Natural killer cell (primary cell): ENCODE measurements at regions of chr3 and their contacts with region 1.

Region 1: DNA sequence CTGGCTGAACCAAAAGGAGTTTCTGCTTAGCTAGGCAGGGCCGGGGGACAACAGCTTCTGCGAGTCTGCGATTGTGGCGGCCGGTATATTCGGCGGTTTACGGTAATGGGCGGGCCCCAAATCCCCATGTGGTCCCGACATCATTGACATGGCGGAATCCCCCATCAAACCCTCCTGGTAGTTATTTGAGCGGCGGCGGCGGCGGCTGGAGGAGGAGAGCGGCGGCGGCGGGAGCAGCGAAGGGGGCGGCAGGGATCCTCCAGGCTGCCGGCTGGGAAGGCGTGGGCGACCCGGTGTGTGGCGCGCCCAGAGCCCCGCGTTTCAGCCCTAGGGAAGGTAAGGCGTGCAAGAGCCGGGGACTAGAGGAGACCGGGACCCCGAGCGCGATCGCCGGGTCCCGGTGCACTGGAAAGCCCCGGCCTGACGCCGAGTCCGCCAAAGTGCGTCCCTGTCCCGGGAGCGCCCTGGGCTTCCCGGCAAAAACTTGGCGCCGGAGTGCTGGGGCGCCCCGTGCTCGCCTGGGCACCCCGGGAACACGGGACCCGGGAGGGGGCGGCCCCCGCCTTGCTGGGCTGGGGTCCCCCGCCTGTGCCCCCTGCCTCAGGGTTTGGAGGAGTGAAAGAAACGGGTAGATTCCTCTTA is at the start of gene FNDC3B:
- DNase-seq: peak; percentile 93 to 94
- ATAC-seq: peak; percentile 81 to 92 (median 87)
- H3K4me3 ChIP-seq: peak within 1 kb of the TSS; percentile 99
- H3K4me3 Mint-ChIP-seq: peak within 1 kb of the TSS; percentile 98
- H3K27ac ChIP-seq: peak within 1 kb of the TSS; percentile 99
- H3K27ac Mint-ChIP-seq: peak within 1 kb of the TSS; percentile 94 to 100
- H3K4me1 ChIP-seq: peaks cover 42% of the 10 kb centered on the region
- H3K4me1 Mint-ChIP-seq: peaks cover 66 to 77% of the 10 kb centered on the region in 2 donors
- H3K27me3 ChIP-seq: no peaks in the 10 kb centered on the region
- H3K27me3 Mint-ChIP-seq: no peaks in the 10 kb centered on the region
- CTCF ChIP-seq: no peak
- total RNA-seq, gene FNDC3B: 154 to 214 (median 206) TPM

Region 2: GRCh38 chr3:171809821-171810628 is 229.5 kb before region 1 on chr3 and contains the start of gene PLD1:
- intact Hi-C with region 1: loop called (anchors 5 kb)
- DNase-seq: peak; percentile 58 to 65
- ATAC-seq: peak; percentile 67 to 86 (median 81)
- H3K4me3 ChIP-seq: peak within 1 kb of the TSS; percentile 73
- H3K4me3 Mint-ChIP-seq: peak within 1 kb of the TSS; percentile 93
- H3K27ac ChIP-seq: peak within 1 kb of the TSS; percentile 58
- H3K27ac Mint-ChIP-seq: peak within 1 kb of the TSS; percentile 80 to 93
- H3K4me1 ChIP-seq: peaks cover 19% of the 10 kb centered on the region
- H3K4me1 Mint-ChIP-seq: peaks cover 42 to 47% of the 10 kb centered on the region in 2 donors
- H3K27me3 ChIP-seq: no peaks in the 10 kb centered on the region
- H3K27me3 Mint-ChIP-seq: no peaks in the 10 kb centered on the region
- CTCF ChIP-seq: no peak
- total RNA-seq, gene PLD1: 13.2 to 26.3 (median 17.1) TPM

Region 3: GRCh38 chr3:171980578-171981270 is 58.8 kb before region 1 on chr3:
- intact Hi-C with region 1: loop called (anchors 5 kb)
- DNase-seq: peak; percentile 27 to 43
- ATAC-seq: peak; percentile 97 to 99 (median 97)
- H3K4me3 ChIP-seq: no peak overlapping the region
- H3K4me3 Mint-ChIP-seq: peak overlapping the region; percentile 75
- H3K27ac ChIP-seq: peak overlapping the region; percentile 23
- H3K27ac Mint-ChIP-seq: peak overlapping the region; percentile 87 to 88
- H3K4me1 ChIP-seq: peaks cover 20% of the 10 kb centered on the region
- H3K4me1 Mint-ChIP-seq: peaks cover 39 to 48% of the 10 kb centered on the region in 2 donors
- H3K27me3 ChIP-seq: no peaks in the 10 kb centered on the region
- H3K27me3 Mint-ChIP-seq: no peaks in the 10 kb centered on the region
- CTCF ChIP-seq: no peak

Region 4: GRCh38 chr3:172129870-172130683 is 90.5 kb after region 1 on chr3:
- intact Hi-C with region 1: loop called (anchors 1 kb)
- DNase-seq: peak; percentile 70 to 74
- ATAC-seq: peak; percentile 68 to 80 (median 68)
- H3K4me3 ChIP-seq: no peak overlapping the region
- H3K4me3 Mint-ChIP-seq: peak overlapping the region; percentile 87
- H3K27ac ChIP-seq: peak overlapping the region; percentile 94
- H3K27ac Mint-ChIP-seq: peak overlapping the region; percentile 88 to 99
- H3K4me1 ChIP-seq: peaks cover 47% of the 10 kb centered on the region
- H3K4me1 Mint-ChIP-seq: peaks cover 82 to 83% of the 10 kb centered on the region in 2 donors
- H3K27me3 ChIP-seq: no peaks in the 10 kb centered on the region
- H3K27me3 Mint-ChIP-seq: no peaks in the 10 kb centered on the region
- CTCF ChIP-seq: no peak

Region 5: DNA sequence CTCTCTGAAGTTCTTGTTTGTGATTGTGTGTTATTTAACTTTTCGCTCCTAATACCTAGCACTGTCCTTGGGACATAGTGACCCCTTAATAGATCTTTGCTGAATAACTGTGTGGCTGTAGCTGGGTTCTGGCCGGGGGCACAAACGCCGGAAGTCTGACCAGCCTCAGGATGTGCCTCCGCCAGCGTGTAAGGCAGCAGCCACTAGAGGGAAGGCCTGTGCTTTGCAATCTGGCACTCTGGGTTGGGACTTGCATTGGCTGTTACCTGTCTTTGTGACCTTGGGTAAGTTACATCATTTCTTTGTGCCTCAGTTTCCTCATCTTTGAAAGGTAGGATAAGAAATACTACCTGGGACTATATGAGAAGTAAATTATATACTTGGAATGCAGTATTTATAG is 250.0 kb after region 1 on chr3:
- intact Hi-C with region 1: loop called (anchors 5 kb)
- DNase-seq: peak in 1 of 2 donors; percentile 22
- ATAC-seq: peak; percentile 75 to 83 (median 81)
- H3K4me3 ChIP-seq: no peak overlapping the region
- H3K4me3 Mint-ChIP-seq: peak overlapping the region; percentile 87
- H3K27ac ChIP-seq: peak overlapping the region; percentile 4
- H3K27ac Mint-ChIP-seq: peak overlapping the region; percentile 85 to 90
- H3K4me1 ChIP-seq: peaks cover 17% of the 10 kb centered on the region
- H3K4me1 Mint-ChIP-seq: peaks cover 66 to 72% of the 10 kb centered on the region in 2 donors
- H3K27me3 ChIP-seq: no peaks in the 10 kb centered on the region
- H3K27me3 Mint-ChIP-seq: no peaks in the 10 kb centered on the region
- CTCF ChIP-seq: peak; percentile 44

Region 6: GRCh38 chr3:172341482-172342059 is 302.0 kb after region 1 on chr3:
- intact Hi-C with region 1: loop called (anchors 5 kb)
- DNase-seq: peak in 1 of 2 donors; percentile 77
- ATAC-seq: peak; percentile 75 to 85 (median 83)
- H3K4me3 ChIP-seq: no peak overlapping the region
- H3K4me3 Mint-ChIP-seq: no peak overlapping the region
- H3K27ac ChIP-seq: no peak overlapping the region
- H3K27ac Mint-ChIP-seq: peak overlapping the region in 1 of 2 donors; percentile 51
- H3K4me1 ChIP-seq: no peaks in the 10 kb centered on the region
- H3K4me1 Mint-ChIP-seq: peaks cover 5 to 9% of the 10 kb centered on the region in 2 donors
- H3K27me3 ChIP-seq: no peaks in the 10 kb centered on the region
- H3K27me3 Mint-ChIP-seq: no peaks in the 10 kb centered on the region
- CTCF ChIP-seq: peak; percentile 75